Aorta (tissue), 5 donors: ENCODE measurements at regions of chr9 and their contacts with region 1.

Region 1: GRCh38 chr9:107732781-107733522 is 243.4 kb upstream of the KLF4 start:
- DNase-seq: peak in 1 of 2 donors; percentile 82
- ATAC-seq: peak; percentile 56
- H3K4me3 ChIP-seq: peak overlapping the region in 1 of 2 donors; percentile 37
- H3K27ac ChIP-seq: peak overlapping the region; percentile 88 to 95
- H3K4me1 ChIP-seq: peaks cover 0 to under 1% of the 10 kb centered on the region in 2 donors
- H3K27me3 ChIP-seq: no peaks in the 10 kb centered on the region

Region 2: DNA sequence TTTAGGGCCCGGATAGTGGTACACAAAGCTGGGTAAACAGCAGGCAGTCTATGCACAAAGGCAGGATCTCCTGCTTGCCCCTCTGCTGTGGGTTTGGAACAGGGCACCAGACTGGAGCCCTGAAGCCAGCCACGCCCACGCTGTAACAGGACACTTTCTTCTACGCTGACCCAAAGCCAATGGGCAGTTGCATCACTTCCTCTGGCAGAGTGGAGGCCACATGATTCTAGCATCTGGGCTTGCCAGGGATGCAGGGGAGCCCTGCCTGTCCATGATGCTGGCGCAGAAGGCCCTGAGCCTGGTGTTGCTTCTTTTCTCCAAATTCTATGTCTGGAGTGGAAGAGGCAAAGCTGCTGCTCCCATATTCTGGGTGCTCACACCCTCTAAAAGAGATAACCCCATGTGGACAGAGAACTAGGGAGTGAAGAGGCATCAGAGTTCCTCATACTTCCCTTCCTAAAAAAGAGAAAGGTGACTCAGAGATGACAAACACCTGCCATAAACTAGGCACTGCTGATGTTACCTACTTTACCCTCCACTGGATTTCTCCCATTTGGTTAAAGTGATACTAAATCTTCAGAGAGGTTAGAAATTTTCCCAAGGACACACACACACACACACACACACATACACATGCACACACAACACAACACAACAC is 17.0 kb after region 1 on chr9:
- intact Hi-C with region 1: loop called in 1 of 2 experiments (anchors 2 kb)
- DNase-seq: peak; percentile 93 to 95
- ATAC-seq: peak; percentile 94
- H3K4me3 ChIP-seq: no peak overlapping the region
- H3K27ac ChIP-seq: peak overlapping the region; percentile 96 to 98
- H3K4me1 ChIP-seq: peaks cover 4 to 8% of the 10 kb centered on the region in 2 donors
- H3K27me3 ChIP-seq: no peaks in the 10 kb centered on the region

Region 3: GRCh38 chr9:108478431-108478837 is 745.5 kb after region 1 on chr9:
- intact Hi-C with region 1: loop called in 1 of 2 experiments (anchors 10 kb)
- DNase-seq: peak in 1 of 2 donors; percentile 67
- ATAC-seq: peak; percentile 78
- H3K4me3 ChIP-seq: no peak overlapping the region
- H3K27ac ChIP-seq: peak overlapping the region; percentile 72 to 90
- H3K4me1 ChIP-seq: peaks cover 0 to 2% of the 10 kb centered on the region in 2 donors
- H3K27me3 ChIP-seq: no peaks in the 10 kb centered on the region